Right ventricle myocardium superior (tissue), 1 donor: ENCODE measurements at regions of chr19 and their contacts with region 1.

Region 1: GRCh38 chr19:7799640-7800355 is 30.2 kb upstream of the EVI5L start:
- DNase-seq: peak; percentile 77
- ATAC-seq: peak; percentile 88

Region 2: DNA sequence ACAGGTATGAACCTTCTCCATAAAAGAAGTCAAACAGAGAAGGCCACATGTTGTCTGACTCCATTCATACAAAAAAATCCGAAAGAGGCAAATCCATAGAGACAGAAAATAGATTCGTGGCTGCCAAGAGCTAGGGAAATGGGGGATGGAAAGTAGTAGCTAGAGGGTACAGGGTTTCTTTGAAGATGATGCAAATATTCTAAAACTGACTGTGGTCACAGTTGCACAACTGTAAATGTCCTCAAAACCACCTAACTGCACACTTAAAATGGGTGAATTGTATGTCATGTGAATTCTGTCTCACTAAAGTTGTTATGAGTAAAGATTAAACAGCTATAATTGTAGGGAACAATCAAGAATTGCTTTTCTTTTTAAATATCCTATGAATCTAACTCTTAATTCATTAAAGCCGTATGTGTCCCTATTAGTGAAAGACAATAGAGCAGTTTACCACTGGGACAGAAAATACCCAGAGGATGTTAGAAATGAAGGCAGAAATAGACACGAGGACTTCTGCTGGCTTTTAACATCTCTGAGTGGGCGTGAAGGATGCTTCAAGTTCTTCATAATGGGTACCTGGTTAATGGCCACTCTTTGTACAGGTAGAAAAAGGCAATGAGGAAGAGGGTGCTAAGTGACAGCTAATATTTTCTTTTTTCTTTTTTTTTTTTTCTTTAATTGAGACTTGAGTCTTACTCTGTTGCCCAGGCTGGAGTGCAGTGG is 526.8 kb before region 1 on chr19:
- intact Hi-C with region 1: no loop called
- DNase-seq: no peak
- ATAC-seq: no peak

Region 3: DNA sequence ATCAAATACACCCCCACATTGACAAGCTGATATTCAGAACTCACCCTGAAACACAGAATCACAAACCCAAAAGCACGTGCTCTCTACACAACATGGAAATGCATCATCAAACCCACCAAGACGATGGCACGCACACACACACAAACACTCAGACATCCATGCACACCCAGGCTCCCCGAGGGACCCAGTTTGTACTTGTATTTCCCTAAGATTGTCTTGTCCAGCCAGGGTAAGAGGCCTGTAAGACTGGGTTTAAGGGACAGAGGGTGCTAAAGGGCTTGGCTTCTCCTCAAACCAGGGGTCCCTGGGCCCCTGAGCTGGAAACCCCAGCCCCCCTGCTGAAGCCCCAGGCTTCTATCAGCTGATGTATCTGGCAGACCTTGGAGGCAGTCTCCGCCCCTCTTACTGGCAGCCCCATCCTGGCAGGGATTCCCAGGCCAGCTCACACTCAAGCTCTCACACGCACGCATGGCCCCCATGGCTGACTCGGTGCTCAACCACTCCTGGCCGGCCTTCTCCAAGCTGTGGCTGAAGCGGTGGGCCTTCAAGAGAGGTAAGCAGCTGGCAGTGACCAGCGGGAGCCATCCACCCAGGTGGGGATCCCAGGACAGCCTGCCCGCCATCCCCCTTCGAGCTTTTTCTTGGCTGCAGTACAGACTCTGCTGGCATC is 444.5 kb before region 1 on chr19:
- intact Hi-C with region 1: loop called (anchors 5 kb)
- DNase-seq: no peak
- ATAC-seq: no peak

Region 4: DNA sequence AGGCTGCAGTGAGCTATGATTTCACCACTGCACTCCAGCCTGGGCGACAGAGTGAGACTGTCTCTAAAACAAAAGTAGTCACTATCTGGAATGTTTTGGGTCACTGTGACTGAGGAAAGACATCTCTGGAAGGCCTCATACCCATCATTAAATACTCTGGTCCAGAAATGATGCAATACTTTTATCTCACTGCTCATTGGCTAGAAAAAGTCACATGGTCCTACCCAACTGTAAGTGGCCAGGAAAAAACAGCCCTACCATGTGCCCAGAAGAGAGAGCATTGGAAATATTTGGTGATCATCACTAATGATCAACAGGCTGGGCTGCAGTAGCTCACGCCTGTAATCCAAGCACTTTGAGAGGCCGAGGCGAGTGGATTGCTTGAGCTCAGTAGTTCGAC is 234.5 kb before region 1 on chr19:
- intact Hi-C with region 1: loop called (anchors 5 kb)
- DNase-seq: no peak
- ATAC-seq: no peak

Region 5: GRCh38 chr19:7652061-7652641 is 147.6 kb before region 1 on chr19:
- intact Hi-C with region 1: loop called (anchors 10 kb)
- DNase-seq: peak; percentile 89
- ATAC-seq: peak; percentile 85